ENCODE measurements at regions of chr17 and their contacts with region 1.

Region 1: GRCh38 chr17:14605267-14605599 is 304.4 kb downstream of the HS3ST3B1 start:
- DNase-seq: peak; percentile 88 to 93 (median 90)
- H3K4me3 ChIP-seq: peak overlapping the region; percentile 36 to 86 (median 75)
- H3K4me3 Mint-ChIP-seq: peak overlapping the region; percentile 75 to 93
- H3K27ac ChIP-seq: peak overlapping the region; percentile 79 to 95
- H3K27ac Mint-ChIP-seq: peak overlapping the region; percentile 94 to 99 (median 98)
- H3K4me1 ChIP-seq: peaks cover 16 to 24% of the 10 kb centered on the region in 2 donors
- H3K4me1 Mint-ChIP-seq: peaks cover 26% of the 10 kb centered on the region
- H3K27me3 ChIP-seq: no peaks in the 10 kb centered on the region
- H3K27me3 Mint-ChIP-seq: peaks cover 0 to 1% (median 0%) of the 10 kb centered on the region in 3 donors
- CTCF ChIP-seq: no peak

Region 2: GRCh38 chr17:14737984-14738659 is 132.9 kb after region 1 on chr17:
- intact Hi-C with region 1: loop called (anchors 10 kb)
- DNase-seq: peak; percentile 93 to 99 (median 98)
- H3K4me3 ChIP-seq: peak overlapping the region in 2 of 3 experiments; percentile 10 to 46
- H3K4me3 Mint-ChIP-seq: peak overlapping the region; percentile 39 to 81
- H3K27ac ChIP-seq: peak overlapping the region; percentile 89 to 90
- H3K27ac Mint-ChIP-seq: peak overlapping the region; percentile 97 to 100 (median 99)
- H3K4me1 ChIP-seq: peaks cover 41 to 46% of the 10 kb centered on the region in 2 donors
- H3K4me1 Mint-ChIP-seq: peaks cover 49% of the 10 kb centered on the region
- H3K27me3 ChIP-seq: no peaks in the 10 kb centered on the region
- H3K27me3 Mint-ChIP-seq: peaks cover 0 to 3% (median 2%) of the 10 kb centered on the region in 3 donors
- CTCF ChIP-seq: peak; percentile 78

Measured in CD14-positive monocyte (primary cell).